Astrocyte of the cerebellum (primary cell): ENCODE measurements at regions of chr2 and their contacts with region 1.

Region 1: GRCh38 chr2:37604716-37605115 is 66.7 kb downstream of the CDC42EP3 start:
- DNase-seq: no peak
- H3K4me3 ChIP-seq: no peak overlapping the region
- CTCF ChIP-seq: no peak

Region 2: GRCh38 chr2:37641582-37642171 is 37.0 kb after region 1 on chr2:
- in situ Hi-C with region 1: loop called (anchors 5 kb)
- DNase-seq: no peak
- H3K4me3 ChIP-seq: no peak overlapping the region
- CTCF ChIP-seq: no peak

Region 3: DNA sequence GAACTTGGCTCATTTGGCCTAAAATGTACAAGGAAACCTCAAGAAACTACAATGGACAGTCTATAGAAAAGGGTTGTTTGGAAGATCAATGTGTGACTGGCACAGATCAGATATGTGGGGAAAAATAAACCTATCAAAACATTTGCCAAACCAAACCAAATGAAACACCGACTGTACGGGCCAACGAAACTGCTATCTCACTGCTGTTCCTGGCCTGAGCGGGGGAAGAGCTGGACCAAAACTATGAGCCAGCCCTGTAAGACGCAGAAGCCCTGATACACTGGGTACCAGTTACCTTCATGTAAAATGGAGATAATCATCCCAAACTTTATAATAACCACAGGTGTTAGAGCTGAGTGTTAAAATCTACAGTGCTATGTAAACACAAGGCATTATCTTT is 55.0 kb after region 1 on chr2:
- in situ Hi-C with region 1: no loop called
- DNase-seq: no peak
- H3K4me3 ChIP-seq: no peak overlapping the region
- CTCF ChIP-seq: no peak

Region 4: GRCh38 chr2:37672104-37672869 is 67.6 kb after region 1 on chr2:
- in situ Hi-C with region 1: no loop called
- DNase-seq: peak; percentile 78
- H3K4me3 ChIP-seq: peak overlapping the region; percentile 96
- CTCF ChIP-seq: no peak